GM10248 (cell line): ENCODE measurements at regions of chr10 and their contacts with region 1.

Region 1: DNA sequence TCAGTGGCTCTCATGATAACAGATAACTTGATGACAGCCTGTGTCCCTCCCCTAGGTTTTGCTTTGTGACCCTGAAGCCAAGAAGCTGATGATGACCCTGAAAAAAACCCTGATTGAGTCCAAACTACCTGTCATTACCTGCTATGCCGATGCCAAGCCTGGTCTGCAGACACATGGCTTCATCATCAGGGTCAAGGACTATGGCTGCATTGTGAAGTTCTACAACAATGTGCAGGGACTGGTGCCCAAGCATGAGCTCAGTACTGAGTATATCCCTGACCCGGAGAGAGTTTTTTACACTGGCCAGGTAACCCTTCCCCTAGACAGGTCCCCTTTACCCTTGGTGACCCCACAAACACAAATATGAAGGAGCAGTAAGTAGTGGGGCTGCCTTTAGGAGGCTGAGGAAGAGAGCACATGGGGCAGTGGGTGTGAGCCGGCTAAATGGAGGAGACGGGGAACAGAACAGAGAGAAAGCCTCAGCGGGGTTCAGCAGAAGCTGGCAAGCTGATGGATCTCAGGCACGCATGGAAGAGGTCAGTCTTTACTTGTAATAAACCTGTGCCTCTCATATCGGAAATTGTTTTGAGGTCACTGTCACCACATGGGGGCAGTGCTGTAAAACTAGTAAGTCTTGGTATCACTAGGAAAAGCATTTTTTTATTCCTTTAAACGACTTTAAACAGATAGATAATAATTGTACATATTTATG is 20.2 kb downstream of the PDCD11 start:
- DNase-seq: peak; percentile 61
- CTCF ChIP-seq: peak; percentile 63

Region 2: GRCh38 chr10:102894466-102895213 is 522.0 kb before region 1 on chr10:
- CTCF ChIA-PET with region 1: no interaction called
- POLR2A ChIA-PET with region 1: no interaction called
- DNase-seq: no peak
- CTCF ChIP-seq: no peak

Region 3: DNA sequence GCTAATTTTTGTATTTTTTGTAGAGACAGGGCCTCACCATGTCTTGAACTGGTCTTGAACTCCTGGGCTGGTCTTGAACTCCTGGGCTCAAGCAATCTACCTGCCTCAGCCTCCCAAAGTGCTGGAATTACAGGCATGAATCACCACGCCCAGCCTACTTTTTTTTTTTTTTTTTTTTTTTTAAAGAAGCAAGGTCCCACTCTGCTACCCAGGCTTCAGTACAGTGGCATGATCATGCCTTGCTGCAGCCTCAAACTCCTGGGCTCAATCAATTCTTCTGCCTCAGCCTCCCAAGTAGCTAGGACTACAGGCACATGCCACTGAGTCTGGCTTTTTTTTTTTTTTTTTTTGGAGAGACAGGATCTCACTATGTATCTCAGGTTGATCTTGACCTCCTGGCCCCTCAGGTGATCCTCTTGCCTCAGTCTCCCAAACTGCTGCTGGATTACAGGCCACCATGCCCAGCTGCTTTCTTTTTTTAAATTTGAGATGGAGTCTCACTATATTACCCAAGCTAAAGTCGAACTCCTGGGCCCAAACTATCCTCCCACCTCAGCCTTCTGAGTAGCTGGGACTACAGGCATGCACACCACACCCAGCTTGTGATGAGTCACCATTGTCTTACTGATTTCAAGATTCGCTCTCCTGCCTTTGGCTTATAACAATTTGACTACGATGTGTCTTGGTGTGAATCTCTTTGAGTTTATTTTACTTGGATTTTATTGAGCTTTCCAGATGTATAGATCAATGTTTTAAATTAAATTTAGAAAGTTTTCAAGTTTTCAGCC is 161.9 kb before region 1 on chr10:
- CTCF ChIA-PET with region 1: no interaction called
- POLR2A ChIA-PET with region 1: no interaction called
- DNase-seq: no peak
- CTCF ChIP-seq: no peak

Region 4: GRCh38 chr10:103295374-103296015 is 121.1 kb before region 1 on chr10:
- CTCF ChIA-PET with region 1: no interaction called
- POLR2A ChIA-PET with region 1: no interaction called
- DNase-seq: no peak
- CTCF ChIP-seq: no peak

Region 5: GRCh38 chr10:103396064-103396788 is 20.4 kb before region 1 on chr10 and contains the starts of genes ATP5MK and PDCD11:
- CTCF ChIA-PET with region 1: interaction called, 23 read pairs
- POLR2A ChIA-PET with region 1: no interaction called
- DNase-seq: peak; percentile 98
- CTCF ChIP-seq: no peak

Region 6: DNA sequence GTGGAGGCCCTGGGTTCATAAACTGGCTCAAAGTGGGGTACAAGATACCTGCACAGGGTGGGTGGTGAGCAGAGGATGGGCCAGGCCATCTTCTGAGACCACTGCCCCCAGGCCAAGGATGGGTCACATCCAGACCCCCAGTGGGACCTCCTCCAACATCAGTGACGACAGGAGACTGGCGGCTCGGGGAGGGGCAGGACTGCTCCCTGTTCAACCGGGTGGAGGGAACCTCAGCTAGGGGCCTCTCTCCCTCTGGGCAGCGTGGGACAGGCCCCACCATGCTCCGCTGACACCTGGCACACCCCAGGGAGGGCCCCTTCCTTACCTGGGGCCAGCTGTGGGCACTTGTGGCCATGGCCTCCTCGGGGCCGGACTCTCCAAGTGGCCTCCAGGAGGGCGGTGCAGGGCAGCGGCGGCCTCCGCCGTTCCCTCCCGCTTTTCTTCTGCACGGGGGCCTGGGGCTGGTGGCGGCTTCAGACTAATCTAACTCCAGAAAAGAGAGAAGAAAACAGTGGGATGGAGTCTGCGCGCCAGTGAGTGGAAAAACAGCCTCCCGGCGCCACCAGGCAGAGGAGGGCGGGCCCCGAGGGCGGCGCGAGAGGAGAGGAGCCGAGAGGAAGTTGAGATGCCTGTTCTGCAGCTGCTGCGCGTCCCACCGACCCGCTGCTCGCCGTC is 35.4 kb after region 1 on chr10 and contains the start of gene CALHM2:
- CTCF ChIA-PET with region 1: interaction called, 30 read pairs
- POLR2A ChIA-PET with region 1: no interaction called
- DNase-seq: peak; percentile 89
- CTCF ChIP-seq: no peak

Region 7: GRCh38 chr10:103481974-103482531 is 65.5 kb after region 1 on chr10:
- CTCF ChIA-PET with region 1: interaction called, 135 read pairs
- POLR2A ChIA-PET with region 1: no interaction called
- DNase-seq: peak; percentile 74
- CTCF ChIP-seq: peak; percentile 59